Astrocyte of the cerebellum (primary cell): ENCODE measurements at regions of chr21 and their contacts with region 1.

Region 1: DNA sequence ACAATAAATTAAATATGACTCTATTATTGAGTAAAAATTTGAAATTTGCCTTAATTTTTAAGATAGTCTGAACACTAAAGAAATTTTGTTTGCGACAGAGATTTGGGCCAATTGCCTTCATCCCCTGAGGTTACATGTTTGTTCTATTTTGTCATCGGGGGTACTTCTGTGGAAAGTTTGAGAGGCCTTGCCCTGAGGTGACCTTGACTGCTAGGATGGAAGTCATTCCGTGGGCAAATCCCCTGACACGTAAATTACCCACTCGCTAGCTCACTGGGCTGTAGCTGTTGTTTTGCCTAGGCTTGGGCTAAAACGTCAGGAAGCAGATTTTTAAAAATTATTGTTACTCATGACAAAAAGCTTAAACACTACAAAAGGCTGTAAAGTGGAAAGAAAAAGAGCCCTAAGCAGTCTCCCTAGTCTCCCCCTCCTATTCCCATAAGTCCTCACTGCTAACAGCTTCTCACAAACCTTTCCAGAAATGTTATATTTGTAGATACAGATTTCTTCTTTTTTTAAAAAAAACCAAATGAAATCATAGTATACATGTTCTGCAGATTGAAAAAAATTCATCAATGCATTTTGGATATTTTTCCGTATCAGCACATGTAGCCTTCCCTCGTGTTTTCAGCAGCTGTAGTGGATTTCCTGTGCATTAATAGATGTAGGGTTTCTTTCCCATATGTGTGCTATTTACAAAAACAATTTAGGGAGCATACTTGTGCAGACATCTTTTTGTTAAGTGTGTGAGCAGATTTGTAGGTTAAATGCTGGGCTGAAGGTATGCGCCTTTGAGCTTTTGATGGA is 142.7 kb downstream of the MRPS6 start:
- DNase-seq: no peak
- H3K4me3 ChIP-seq: no peak overlapping the region
- CTCF ChIP-seq: no peak

Region 2: GRCh38 chr21:33268737-33269441 is 947.2 kb before region 1 on chr21:
- in situ Hi-C with region 1: no loop called
- DNase-seq: no peak
- H3K4me3 ChIP-seq: no peak overlapping the region
- CTCF ChIP-seq: no peak

Region 3: GRCh38 chr21:34154878-34155277 is 61.2 kb before region 1 on chr21:
- in situ Hi-C with region 1: loop called (anchors 5 kb)
- DNase-seq: no peak
- H3K4me3 ChIP-seq: no peak overlapping the region
- CTCF ChIP-seq: no peak

Region 4: GRCh38 chr21:34261841-34262468 is 45.8 kb after region 1 on chr21:
- in situ Hi-C with region 1: loop called (anchors 5 kb)
- DNase-seq: no peak
- H3K4me3 ChIP-seq: no peak overlapping the region
- CTCF ChIP-seq: no peak

Region 5: GRCh38 chr21:34272321-34272720 is 56.2 kb after region 1 on chr21:
- in situ Hi-C with region 1: no loop called
- DNase-seq: no peak
- H3K4me3 ChIP-seq: no peak overlapping the region
- CTCF ChIP-seq: no peak

Region 6: GRCh38 chr21:34313116-34313515 is 97.0 kb after region 1 on chr21:
- in situ Hi-C with region 1: no loop called
- DNase-seq: no peak
- H3K4me3 ChIP-seq: no peak overlapping the region
- CTCF ChIP-seq: no peak